K562 (cell line): ENCODE measurements at regions of chr17 and their contacts with region 1.

Region 1: DNA sequence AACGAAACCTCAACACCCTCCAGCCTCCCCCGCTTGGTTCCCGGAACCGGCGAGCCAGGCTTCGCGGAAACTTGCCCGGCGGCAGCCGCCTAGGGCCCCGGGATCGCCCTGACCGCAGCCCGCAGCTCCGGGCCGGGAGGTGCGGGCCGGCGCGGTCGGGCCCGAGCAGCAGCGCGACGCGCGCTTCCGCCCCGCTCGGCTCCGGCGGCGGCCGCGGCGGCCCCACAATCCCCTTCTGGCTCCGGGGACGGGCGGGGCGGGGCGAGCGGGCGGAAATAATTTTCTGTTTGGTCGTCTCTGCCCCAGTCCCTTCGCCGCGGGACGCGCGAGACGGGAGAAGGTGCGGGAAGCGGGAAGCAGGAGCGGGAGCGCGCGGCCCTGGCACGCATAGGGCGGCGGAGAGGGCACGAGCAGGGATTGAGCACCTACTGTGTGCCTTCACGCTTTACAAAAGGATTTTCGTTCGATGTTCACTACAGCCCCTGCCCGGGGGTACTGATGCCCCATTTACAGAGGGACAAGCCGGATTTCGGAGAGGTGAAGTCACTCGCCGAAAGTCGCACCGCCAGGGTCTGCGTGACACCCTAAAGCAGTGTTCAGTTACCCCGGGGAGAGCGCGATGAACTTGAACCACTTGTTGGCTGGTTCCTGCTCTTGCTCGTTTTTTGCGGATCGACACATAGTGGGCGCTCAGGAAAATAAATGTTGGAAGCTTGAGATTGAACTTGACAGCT is 2.7 kb upstream of the MLLT6 start:
- DNase-seq: peak; percentile 78 to 92 (median 83)
- ATAC-seq: peak; percentile 68
- H3K4me3 ChIP-seq: peak overlapping the region; percentile 86
- H3K27ac ChIP-seq: peak overlapping the region; percentile 96
- H3K4me1 ChIP-seq: peaks cover 26 to 64% of the 10 kb centered on the region in 2 experiments
- H3K27me3 ChIP-seq: no peaks in the 10 kb centered on the region
- CTCF ChIP-seq: no peak
- EP300 ChIP-seq: no peak
- POLR2A ChIP-seq: peak; percentile 87
- RAD21 ChIP-seq: no peak

Region 2: GRCh38 chr17:38554430-38555350 is 147.6 kb before region 1 on chr17:
- CTCF ChIA-PET with region 1: no interaction called
- POLR2A ChIA-PET with region 1: no interaction called
- in situ Hi-C with region 1: no loop called
- intact Hi-C with region 1: no loop called
- DNase-seq: no peak
- ATAC-seq: no peak
- H3K4me3 ChIP-seq: no peak overlapping the region
- H3K27ac ChIP-seq: no peak overlapping the region
- H3K4me1 ChIP-seq: peaks cover 18 to 36% of the 10 kb centered on the region in 2 experiments
- H3K27me3 ChIP-seq: peaks cover 18 to 42% of the 10 kb centered on the region in 2 experiments; a peak in 4 of 5 replicates
- CTCF ChIP-seq: no peak
- EP300 ChIP-seq: no peak
- POLR2A ChIP-seq: no peak
- RAD21 ChIP-seq: no peak

Region 3: GRCh38 chr17:38674749-38675615 is 27.4 kb before region 1 on chr17 and contains the start of gene EPOP:
- CTCF ChIA-PET with region 1: interaction called, 4 read pairs
- POLR2A ChIA-PET with region 1: no interaction called
- in situ Hi-C with region 1: no loop called
- intact Hi-C with region 1: loop called (anchors 1 kb)
- DNase-seq: peak; percentile 94 to 98 (median 98)
- ATAC-seq: peak; percentile 92
- H3K4me3 ChIP-seq: peak within 1 kb of the TSS; percentile 56
- H3K27ac ChIP-seq: peak within 1 kb of the TSS; percentile 74
- H3K4me1 ChIP-seq: peaks cover 20 to 30% of the 10 kb centered on the region in 2 experiments
- H3K27me3 ChIP-seq: peaks cover 0 to 6% of the 10 kb centered on the region in 2 experiments; a peak in 2 of 5 replicates
- CTCF ChIP-seq: no peak
- EP300 ChIP-seq: no peak
- POLR2A ChIP-seq: peak; percentile 65
- RAD21 ChIP-seq: no peak
- polyA plus RNA-seq, gene EPOP: 0.41 to 0.62 TPM

Region 4: DNA sequence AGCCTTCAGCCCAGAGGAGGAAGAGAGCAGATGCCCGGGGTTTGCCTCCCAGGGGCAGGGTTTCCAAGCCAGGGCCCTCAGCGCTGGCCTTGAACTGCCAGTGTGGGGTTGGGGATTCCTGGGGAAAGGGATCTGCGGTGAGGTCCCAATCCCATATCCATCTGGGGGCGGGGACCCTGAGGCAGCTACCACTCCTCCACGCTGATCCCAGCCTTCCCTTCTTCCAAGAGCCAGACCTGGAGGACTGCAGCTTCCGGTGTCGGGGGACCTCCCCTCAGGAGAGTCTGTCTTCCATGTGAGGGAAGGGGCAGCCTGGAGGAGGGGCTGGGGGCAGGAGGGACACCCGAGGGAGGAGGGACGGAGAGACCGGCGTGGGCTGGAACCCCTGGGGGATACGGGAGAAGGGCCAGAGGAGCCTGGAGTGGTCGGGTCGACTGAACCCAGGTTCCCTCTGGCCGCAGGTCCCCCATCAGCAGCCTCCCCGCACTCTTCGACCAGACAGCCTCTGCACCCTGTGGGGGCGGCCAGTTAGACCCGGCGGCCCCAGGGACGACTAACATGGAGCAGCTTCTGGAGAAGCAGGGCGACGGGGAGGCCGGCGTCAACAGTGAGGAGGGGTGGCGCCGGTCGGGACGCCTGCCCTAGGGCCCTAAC is 17.1 kb after region 1 on chr17:
- CTCF ChIA-PET with region 1: no interaction called
- POLR2A ChIA-PET with region 1: interaction called, 26 read pairs
- in situ Hi-C with region 1: no loop called
- intact Hi-C with region 1: no loop called
- DNase-seq: no peak
- ATAC-seq: peak; percentile 3
- H3K4me3 ChIP-seq: no peak overlapping the region; the same call in 1 of the 2 replicates
- H3K27ac ChIP-seq: peak overlapping the region; percentile 56
- H3K4me1 ChIP-seq: peaks cover 20 to 41% of the 10 kb centered on the region in 2 experiments
- H3K27me3 ChIP-seq: no peaks in the 10 kb centered on the region
- CTCF ChIP-seq: no peak
- EP300 ChIP-seq: no peak
- POLR2A ChIP-seq: no peak
- RAD21 ChIP-seq: no peak

Region 5: DNA sequence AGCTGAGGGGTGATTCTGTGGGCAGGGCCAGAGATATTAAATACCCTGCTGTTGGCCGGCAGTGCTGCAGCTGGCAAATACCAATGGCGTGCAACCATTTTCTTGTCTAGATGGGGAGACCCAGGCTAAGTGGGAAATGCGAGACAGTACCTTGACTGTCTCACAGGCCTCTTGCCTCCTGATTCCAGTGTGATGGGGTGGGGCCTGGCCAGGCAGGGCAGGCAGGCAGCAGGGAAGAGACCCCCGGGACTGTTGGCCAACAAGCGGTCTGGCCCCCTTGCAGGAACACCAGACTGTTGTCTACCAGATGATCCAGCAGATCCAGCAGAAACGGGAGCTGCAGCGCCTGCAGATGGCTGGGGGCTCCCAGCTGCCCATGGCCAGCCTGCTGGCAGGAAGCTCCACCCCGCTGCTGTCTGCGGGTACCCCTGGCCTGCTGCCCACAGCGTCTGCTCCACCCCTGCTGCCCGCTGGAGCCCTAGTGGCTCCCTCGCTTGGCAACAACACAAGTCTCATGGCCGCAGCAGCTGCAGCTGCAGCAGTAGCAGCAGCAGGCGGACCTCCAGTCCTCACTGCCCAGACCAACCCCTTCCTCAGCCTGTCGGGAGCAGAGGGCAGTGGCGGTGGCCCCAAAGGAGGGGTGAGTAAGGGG is 22.1 kb after region 1 on chr17:
- CTCF ChIA-PET with region 1: interaction called, 3 read pairs
- POLR2A ChIA-PET with region 1: interaction called, 26 read pairs
- in situ Hi-C with region 1: no loop called
- intact Hi-C with region 1: no loop called
- DNase-seq: no peak
- ATAC-seq: no peak
- H3K4me3 ChIP-seq: no peak overlapping the region
- H3K27ac ChIP-seq: no peak overlapping the region
- H3K4me1 ChIP-seq: peaks cover 32 to 57% of the 10 kb centered on the region in 2 experiments
- H3K27me3 ChIP-seq: no peaks in the 10 kb centered on the region
- CTCF ChIP-seq: no peak
- EP300 ChIP-seq: no peak
- POLR2A ChIP-seq: no peak
- RAD21 ChIP-seq: no peak

Region 6: GRCh38 chr17:38752119-38752929 is 50.0 kb after region 1 on chr17 and contains the start of gene PSMB3:
- CTCF ChIA-PET with region 1: no interaction called
- POLR2A ChIA-PET with region 1: interaction called, 4 read pairs
- in situ Hi-C with region 1: no loop called
- intact Hi-C with region 1: loop called (anchors 5 kb)
- DNase-seq: peak; percentile 95 to 99 (median 97)
- ATAC-seq: peak; percentile 84
- H3K4me3 ChIP-seq: peak within 1 kb of the TSS; percentile 74
- H3K27ac ChIP-seq: peak within 1 kb of the TSS; percentile 87
- H3K4me1 ChIP-seq: peaks cover 7 to 42% of the 10 kb centered on the region in 2 experiments
- H3K27me3 ChIP-seq: no peaks in the 10 kb centered on the region
- CTCF ChIP-seq: no peak
- EP300 ChIP-seq: peak; percentile 25; the same call in 1 of the 2 replicates
- POLR2A ChIP-seq: peak; percentile 90
- RAD21 ChIP-seq: no peak
- polyA plus RNA-seq, gene PSMB3: 2,413 to 2,775 TPM